Prostate gland (tissue), 2 donors: ENCODE measurements at regions of chr6 and their contacts with region 1.

Region 1: GRCh38 chr6:46410334-46410953 is 80.8 kb downstream of the RCAN2 start:
- DNase-seq: peak; percentile 9
- H3K4me3 ChIP-seq: no peak overlapping the region
- H3K27ac ChIP-seq: no peak overlapping the region
- H3K4me1 ChIP-seq: no peaks in the 10 kb centered on the region
- H3K27me3 ChIP-seq: no peaks in the 10 kb centered on the region
- CTCF ChIP-seq: peak; percentile 54 to 94 (median 68)
- POLR2A ChIP-seq: no peak

Region 2: DNA sequence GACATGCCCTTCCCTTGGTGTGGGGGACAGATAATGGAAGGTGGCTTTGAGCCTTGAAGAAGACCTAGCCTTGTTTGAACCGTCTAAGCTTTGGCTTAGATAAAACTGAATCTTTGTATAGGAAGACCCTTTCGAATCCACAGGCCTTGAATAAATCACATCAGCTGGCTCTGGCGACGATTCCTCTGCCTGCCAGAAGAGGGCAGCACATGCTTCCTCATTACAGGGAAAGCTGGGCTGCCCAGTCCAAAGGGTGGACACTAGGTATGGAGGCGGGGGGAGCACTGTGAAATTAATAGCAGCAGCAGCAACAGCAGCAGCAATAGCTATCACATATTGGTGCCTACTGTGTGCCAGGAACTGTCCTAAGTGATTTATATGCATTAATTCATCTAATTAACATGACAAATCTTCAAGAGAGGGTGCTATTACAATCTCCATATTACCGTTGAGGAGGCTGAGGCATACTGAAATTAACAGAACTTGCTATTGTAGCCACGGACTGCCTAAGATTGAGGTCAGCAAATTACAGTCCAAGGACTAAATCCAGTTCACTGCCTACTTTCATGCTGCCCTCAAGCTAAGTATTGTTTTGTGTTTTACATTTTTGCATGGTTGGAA is 479.9 kb before region 1 on chr6:
- intact Hi-C with region 1: loop called (anchors 5 kb)
- DNase-seq: peak; percentile 51
- H3K4me3 ChIP-seq: no peak overlapping the region
- H3K27ac ChIP-seq: no peak overlapping the region
- H3K4me1 ChIP-seq: no peaks in the 10 kb centered on the region
- H3K27me3 ChIP-seq: no peaks in the 10 kb centered on the region
- CTCF ChIP-seq: peak; percentile 80 to 94 (median 86)
- POLR2A ChIP-seq: no peak

Region 3: DNA sequence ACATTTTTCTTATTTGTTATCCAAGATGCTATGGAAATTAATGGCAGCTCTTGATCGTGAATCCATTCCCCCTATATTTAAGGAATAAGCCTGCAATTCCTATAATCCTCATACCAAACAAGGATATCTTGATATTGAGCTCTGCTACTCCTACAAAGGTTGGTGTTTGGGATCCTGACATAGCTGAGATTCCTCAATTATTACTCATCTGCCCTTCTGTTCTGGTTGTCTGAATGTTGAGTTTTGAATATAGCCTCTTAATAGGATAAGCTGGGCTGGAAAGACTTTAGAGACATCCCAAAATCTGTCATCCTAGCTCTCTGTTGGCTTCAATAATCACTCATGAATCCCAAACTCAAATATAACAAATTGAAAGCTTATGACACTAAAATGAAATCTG is 444.7 kb before region 1 on chr6:
- intact Hi-C with region 1: no loop called
- DNase-seq: no peak
- H3K4me3 ChIP-seq: no peak overlapping the region
- H3K27ac ChIP-seq: no peak overlapping the region
- H3K4me1 ChIP-seq: no peaks in the 10 kb centered on the region
- H3K27me3 ChIP-seq: no peaks in the 10 kb centered on the region
- CTCF ChIP-seq: no peak
- POLR2A ChIP-seq: no peak

Region 4: DNA sequence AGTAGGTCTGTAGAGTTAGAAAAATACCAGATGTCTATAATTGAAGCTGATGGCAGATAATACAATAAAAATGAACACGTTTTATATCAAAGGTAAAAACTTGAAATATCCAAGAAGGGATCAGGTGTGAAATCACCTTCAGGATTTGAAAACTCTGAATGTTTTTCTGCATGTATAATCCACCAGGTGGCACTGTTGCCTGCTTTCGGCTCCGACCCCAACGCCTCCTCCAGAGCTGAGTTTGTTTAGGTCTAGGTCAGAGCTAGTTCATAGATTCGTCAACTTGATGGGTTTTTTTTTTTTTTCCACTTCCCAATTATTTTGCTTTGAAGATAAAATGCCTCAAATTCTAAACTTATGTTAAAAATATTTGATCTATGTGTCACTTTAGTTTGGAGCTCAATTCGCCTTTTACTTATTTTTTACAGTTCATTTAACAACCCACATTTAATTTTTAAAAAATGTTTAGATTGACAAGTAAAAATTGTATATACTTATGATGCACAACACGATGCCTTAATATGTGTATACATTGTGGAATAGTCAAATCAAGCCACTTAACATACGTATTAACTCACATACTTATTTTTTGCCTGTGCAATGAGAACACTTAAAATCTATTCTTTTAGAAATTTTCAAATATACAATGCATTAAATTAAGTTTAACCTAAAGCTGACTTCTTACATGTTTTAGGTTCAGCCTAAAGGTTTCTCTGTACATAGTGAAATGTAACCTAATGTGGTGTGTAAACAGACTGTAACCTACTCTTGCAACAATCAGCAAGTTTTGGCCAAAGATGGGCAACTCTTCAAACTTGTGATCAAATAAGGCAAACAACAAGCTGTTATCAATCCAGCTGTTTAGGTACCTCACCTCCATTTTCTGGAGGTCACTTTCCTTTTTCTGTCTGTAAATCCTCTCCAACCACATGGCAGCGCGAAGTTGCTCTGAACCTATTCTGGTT is 320.0 kb before region 1 on chr6:
- intact Hi-C with region 1: loop called (anchors 2 kb)
- DNase-seq: peak; percentile 57
- H3K4me3 ChIP-seq: no peak overlapping the region
- H3K27ac ChIP-seq: no peak overlapping the region
- H3K4me1 ChIP-seq: no peaks in the 10 kb centered on the region
- H3K27me3 ChIP-seq: no peaks in the 10 kb centered on the region
- CTCF ChIP-seq: peak; percentile 64 to 87 (median 72)
- POLR2A ChIP-seq: no peak